Activated T-helper 2 cell treated with anti-CD3 and anti-CD28 coated beads, Interferon-gamma antibody, Interleukin-2, Interleukin-4, amounts not matched to agents 10 μg/mL and 5 μg/mL and 100 μg/mL, durations not matched to agents 14 hours and 24 hours and 36 hours (primary cell): ENCODE measurements at regions of chr16 and their contacts with region 1.

Region 1: DNA sequence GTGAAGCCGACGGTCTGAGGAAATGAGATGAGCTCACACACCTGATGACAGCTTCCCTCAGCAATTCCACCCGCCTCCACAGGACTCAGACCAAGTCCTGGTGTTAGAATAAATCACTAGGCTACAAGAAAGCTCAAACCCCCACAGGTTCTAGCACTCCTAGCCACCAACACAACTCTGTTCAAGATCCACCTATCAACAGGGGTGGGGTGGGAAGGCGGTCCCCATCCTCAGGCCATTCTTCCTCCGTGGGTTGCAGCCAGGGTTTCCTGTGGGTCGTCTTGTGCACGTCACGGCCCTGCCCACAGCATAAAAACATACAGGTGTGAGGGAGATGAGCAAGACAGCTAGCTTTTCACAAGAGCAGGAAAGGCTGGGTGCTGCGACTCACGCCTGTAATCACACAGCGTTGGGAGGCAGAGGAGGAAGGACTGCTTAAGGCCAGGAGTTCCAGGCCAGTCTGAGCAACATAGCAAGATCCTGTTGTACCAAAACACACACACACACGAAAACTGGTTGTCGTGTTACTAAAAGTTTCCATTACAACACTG is 81.1 kb downstream of the ANKRD11 start:
- DNase-seq: peak; percentile 43
- H3K4me3 Mint-ChIP-seq: peak overlapping the region; percentile 21
- H3K27ac Mint-ChIP-seq: peak overlapping the region; percentile 94
- H3K4me1 Mint-ChIP-seq: peaks cover 62% of the 10 kb centered on the region
- H3K27me3 Mint-ChIP-seq: no peaks in the 10 kb centered on the region

Region 2: GRCh38 chr16:89374393-89374960 is 34.8 kb before region 1 on chr16:
- intact Hi-C with region 1: no loop called
- DNase-seq: no peak
- H3K4me3 Mint-ChIP-seq: no peak overlapping the region
- H3K27ac Mint-ChIP-seq: no peak overlapping the region
- H3K4me1 Mint-ChIP-seq: peaks cover 23% of the 10 kb centered on the region
- H3K27me3 Mint-ChIP-seq: no peaks in the 10 kb centered on the region

Region 3: GRCh38 chr16:89453501-89454321 is 44.5 kb after region 1 on chr16:
- intact Hi-C with region 1: loop called (anchors 5 kb)
- DNase-seq: no peak
- H3K4me3 Mint-ChIP-seq: no peak overlapping the region
- H3K27ac Mint-ChIP-seq: peak overlapping the region; percentile 6
- H3K4me1 Mint-ChIP-seq: peaks cover 53% of the 10 kb centered on the region
- H3K27me3 Mint-ChIP-seq: no peaks in the 10 kb centered on the region

Region 4: DNA sequence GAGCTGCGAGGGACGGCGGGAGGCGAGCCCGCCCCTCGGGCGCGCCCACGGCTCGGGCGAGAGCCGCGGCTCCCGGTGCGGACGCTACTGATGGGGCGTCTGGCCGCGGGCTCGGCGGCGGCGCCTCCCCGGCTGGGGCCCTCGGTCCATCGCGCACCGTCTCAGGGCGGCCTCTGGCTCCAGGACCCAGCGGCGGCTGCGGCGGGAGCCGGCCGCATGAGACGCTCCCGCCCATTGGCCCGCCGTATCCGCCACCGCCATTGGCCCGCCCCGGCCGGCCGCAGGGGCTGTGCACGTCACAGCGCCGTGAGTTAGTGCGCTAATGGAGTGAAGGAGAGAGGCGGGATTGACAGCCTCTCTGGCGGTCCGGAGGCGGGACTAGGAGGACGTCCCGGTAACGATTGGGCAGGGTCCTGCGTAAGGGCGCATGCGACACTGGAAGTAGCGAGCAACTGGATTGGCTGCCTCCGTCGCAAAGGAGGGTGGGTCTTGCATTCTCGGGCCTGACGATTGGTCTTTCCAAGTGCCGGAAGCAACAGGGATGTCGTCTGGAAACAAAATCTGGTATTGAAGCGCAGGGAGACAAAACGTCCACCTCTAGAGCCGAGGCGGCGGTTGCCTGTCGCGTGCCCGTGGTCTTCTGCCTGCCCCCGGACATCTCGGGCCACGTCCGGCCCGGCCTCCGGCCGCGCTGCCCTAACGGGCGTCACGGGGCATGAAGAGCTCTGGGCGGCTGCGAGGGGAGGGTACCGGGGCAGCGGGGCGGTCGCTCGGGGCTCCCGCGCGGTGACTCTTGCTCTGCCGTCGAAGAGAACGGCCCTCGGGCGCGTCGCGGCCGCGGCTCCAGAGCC is 81.4 kb after region 1 on chr16 and contains the start of gene ANKRD11:
- intact Hi-C with region 1: loop called (anchors 2 kb)
- DNase-seq: peak; percentile 99
- H3K4me3 Mint-ChIP-seq: peak within 1 kb of the TSS; percentile 87
- H3K27ac Mint-ChIP-seq: peak within 1 kb of the TSS; percentile 89
- H3K4me1 Mint-ChIP-seq: peaks cover 42% of the 10 kb centered on the region
- H3K27me3 Mint-ChIP-seq: no peaks in the 10 kb centered on the region
- total RNA-seq, gene ANKRD11: 142 and 144 TPM in 2 replicates